ENCODE measurements at regions of chr3 and their contacts with region 1.

Region 1: DNA sequence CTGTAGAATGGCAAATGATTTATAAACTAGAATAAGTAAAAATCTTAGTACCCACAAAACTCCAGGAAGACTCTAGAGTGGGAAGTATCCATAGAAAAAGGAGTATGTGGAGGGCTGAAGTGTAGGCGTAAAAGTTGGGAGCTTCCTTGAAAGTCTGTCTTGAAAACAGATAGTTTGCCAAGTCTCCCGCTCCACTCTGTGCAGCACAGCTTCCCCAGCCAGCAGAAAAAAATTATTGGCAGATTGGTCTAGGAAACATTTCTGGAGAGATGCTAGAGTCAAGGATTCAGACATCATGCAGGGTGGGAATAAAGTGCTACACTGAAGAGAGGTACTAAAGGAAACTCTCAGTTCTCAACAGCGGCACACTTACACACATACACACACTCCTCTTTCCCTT is 53.4 kb upstream of the CD200R1L start:
- DNase-seq: no peak

Region 2: DNA sequence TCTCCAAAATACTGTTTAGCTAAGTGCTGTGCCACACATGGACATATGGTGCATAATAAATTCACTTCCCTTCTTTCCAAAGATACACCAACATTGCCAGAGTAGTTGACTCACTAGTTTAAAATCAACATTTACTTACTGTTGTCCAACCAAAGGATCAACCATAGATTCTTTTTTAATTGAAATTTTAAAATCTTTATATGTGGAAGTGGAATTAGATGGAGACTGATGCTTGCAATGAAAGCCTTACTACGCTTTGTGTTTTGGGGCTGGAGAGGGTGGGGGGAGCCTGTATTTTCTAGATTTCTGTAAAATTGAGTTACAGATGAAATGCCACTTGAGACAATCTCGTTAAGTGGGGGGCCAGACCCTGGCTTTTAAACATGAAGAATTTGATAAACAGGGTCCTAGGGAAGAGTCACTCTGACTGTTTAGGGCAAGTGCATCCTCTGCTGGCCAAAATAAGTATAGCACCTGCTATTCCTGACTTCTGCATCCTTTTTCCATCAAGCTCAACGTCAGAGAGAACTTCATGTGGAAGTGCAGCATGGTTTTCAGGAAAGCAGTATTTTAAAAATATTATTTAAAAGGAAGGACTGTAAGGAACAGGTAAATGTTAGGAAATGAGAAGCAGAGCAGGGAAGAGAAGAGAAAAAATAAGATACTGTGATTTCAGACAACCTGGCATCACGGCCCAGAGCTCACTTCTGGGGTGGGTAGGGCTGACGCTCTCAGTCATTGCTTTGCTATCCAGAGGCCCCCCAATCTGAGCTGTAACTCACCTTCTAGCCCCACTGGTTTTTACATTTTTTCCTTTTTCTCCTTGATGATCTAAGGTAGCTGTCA is 387.9 kb after region 1 on chr3:
- intact Hi-C with region 1: no loop called
- DNase-seq: no peak

Region 3: DNA sequence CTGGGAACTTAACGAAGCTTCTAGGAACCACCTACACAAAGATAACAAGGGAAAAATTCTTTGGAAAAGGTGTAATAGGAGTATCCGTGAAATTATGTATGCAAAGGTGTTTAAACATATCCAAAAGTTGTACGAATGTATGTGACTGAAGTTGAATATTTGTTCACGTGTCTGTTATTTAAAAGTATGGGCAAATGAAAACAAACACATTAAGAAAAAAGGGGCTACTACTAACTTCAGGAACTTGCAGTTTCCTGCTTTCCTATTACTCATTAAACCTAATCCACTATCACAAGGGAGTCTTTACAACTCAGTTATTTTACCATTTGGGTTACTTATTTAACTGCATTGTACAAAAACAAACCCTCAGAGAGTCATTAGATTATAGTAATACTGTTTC is 904.5 kb after region 1 on chr3:
- intact Hi-C with region 1: loop called in 1 of 2 experiments (anchors 5 kb)
- DNase-seq: no peak